GM12878 (cell line): ENCODE measurements at regions of chr14 and their contacts with region 1.

Region 1: DNA sequence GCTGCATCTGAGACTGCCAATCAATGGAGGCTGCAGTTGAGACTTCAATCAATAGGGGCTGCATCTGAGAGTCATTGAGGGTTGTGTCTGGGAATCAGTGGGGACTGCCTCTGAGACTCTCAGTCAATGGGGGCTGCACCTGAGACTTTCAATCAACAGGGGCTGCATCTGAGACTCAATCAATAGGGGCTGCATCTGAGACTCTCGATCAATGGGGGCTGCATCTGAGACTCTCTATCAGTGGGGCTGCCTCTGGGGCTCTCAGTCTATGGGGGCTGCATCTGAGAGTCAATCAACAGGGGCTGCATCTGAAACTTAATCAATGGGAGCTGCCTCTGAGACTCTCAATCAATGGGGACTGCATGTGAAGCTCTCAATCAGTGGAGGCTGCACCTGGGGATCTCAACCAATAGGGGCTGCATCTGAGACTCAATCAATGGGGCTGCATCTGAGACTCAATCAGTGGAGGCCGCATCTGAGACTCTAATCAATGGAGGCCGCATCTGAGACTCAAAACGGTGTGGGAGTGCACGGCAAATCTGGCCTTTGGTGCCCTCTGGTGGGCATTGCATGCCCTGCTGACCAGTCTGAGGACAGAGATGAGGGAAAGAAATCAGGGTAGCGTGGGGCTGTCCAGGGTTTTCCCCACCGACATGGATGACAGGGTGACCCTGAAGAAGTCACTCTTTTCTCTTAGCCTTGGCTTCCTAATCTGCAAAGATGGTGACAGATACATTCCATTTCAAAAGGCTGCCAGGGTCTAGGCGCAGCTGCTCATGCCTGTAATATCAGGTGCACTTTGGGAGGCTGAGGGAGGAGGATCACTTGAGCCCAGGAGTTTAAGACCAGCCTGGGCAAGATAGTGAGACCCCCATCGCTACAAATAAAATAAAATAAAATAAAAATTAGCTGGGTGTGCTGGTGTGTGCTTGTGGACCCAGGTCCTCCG is 41.3 kb upstream of the EIF5 start:
- DNase-seq: peak; percentile 52
- ATAC-seq: peak; percentile 99
- H3K4me3 ChIP-seq: no peak overlapping the region
- H3K27ac ChIP-seq: no peak overlapping the region
- H3K4me1 ChIP-seq: no peaks in the 10 kb centered on the region
- H3K27me3 ChIP-seq: no peaks in the 10 kb centered on the region
- CTCF ChIP-seq: peak; percentile 94 to 98 (median 96)
- EP300 ChIP-seq: no peak
- POLR2A ChIP-seq: no peak
- RAD21 ChIP-seq: peak; percentile 95

Region 2: DNA sequence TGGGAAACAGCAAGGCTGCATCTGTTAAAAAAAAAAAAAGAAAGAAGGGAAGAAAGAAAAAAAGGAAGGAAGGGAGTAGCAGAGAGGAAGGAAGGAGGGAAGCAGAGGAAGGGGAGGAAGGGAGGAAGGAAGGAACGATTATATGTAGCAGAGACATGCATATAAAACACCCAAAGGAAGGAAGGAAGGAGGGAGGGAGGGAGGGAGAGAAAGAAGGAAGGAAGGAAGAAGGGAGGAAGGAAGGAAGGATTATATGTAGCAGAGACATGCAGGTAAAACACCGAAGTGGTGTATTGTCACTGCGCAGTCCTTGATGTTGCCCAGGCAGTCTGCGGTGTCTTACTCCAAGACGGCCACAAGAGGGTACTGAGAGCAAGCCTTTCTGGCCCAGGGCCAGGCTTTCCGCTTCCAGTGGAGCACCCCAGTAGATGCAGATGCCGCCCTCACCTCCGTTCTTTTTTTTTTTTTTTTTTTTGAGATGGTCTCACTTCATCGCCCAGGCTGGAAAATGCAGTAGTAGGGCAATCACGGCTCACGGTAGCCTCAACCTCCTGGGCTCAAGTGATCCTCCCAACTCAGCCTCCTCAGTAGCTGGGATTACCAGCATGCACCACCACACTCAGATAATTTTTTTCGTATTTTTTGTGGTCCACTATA is 214.5 kb before region 1 on chr14:
- CTCF ChIA-PET with region 1: interaction called, 20 read pairs
- POLR2A ChIA-PET with region 1: no interaction called
- RAD21 ChIA-PET with region 1: interaction called, 6 read pairs
- SMC1A ChIA-PET with region 1: interaction called, 7 read pairs
- in situ Hi-C with region 1: loop called (anchors 5 kb)
- intact Hi-C with region 1: loop called (anchors 1 kb)
- DNase-seq: peak; percentile 48
- ATAC-seq: peak; percentile 74
- H3K4me3 ChIP-seq: no peak overlapping the region
- H3K27ac ChIP-seq: no peak overlapping the region
- H3K4me1 ChIP-seq: peaks cover 8% of the 10 kb centered on the region
- H3K27me3 ChIP-seq: no peaks in the 10 kb centered on the region; a peak in 1 of 4 replicates
- CTCF ChIP-seq: peak; percentile 75 to 93 (median 86)
- EP300 ChIP-seq: no peak
- POLR2A ChIP-seq: no peak
- RAD21 ChIP-seq: peak; percentile 83

Region 3: GRCh38 chr14:103158698-103159097 is 134.0 kb before region 1 on chr14:
- CTCF ChIA-PET with region 1: no interaction called
- POLR2A ChIA-PET with region 1: no interaction called
- RAD21 ChIA-PET with region 1: no interaction called
- SMC1A ChIA-PET with region 1: no interaction called
- in situ Hi-C with region 1: no loop called
- intact Hi-C with region 1: no loop called
- DNase-seq: no peak
- ATAC-seq: no peak
- H3K4me3 ChIP-seq: no peak overlapping the region
- H3K27ac ChIP-seq: no peak overlapping the region
- H3K4me1 ChIP-seq: no peaks in the 10 kb centered on the region
- H3K27me3 ChIP-seq: peaks cover 0 to 3% of the 10 kb centered on the region in 2 experiments; a peak in 3 of 4 replicates
- CTCF ChIP-seq: no peak
- EP300 ChIP-seq: no peak
- POLR2A ChIP-seq: no peak
- RAD21 ChIP-seq: no peak

Region 4: GRCh38 chr14:103185051-103185992 is 107.4 kb before region 1 on chr14:
- CTCF ChIA-PET with region 1: interaction called, 21 read pairs
- POLR2A ChIA-PET with region 1: no interaction called
- RAD21 ChIA-PET with region 1: no interaction called
- SMC1A ChIA-PET with region 1: interaction called, 3 read pairs
- in situ Hi-C with region 1: no loop called
- intact Hi-C with region 1: loop called (anchors 2 kb)
- DNase-seq: no peak
- ATAC-seq: peak; percentile 41
- H3K4me3 ChIP-seq: no peak overlapping the region
- H3K27ac ChIP-seq: no peak overlapping the region
- H3K4me1 ChIP-seq: no peaks in the 10 kb centered on the region
- H3K27me3 ChIP-seq: peaks cover 0 to 2% of the 10 kb centered on the region in 2 experiments; a peak in 1 of 4 replicates
- CTCF ChIP-seq: peak; percentile 48 to 67 (median 55); a peak in 5 of 6 replicates
- EP300 ChIP-seq: no peak
- POLR2A ChIP-seq: no peak
- RAD21 ChIP-seq: peak; percentile 62

Region 5: DNA sequence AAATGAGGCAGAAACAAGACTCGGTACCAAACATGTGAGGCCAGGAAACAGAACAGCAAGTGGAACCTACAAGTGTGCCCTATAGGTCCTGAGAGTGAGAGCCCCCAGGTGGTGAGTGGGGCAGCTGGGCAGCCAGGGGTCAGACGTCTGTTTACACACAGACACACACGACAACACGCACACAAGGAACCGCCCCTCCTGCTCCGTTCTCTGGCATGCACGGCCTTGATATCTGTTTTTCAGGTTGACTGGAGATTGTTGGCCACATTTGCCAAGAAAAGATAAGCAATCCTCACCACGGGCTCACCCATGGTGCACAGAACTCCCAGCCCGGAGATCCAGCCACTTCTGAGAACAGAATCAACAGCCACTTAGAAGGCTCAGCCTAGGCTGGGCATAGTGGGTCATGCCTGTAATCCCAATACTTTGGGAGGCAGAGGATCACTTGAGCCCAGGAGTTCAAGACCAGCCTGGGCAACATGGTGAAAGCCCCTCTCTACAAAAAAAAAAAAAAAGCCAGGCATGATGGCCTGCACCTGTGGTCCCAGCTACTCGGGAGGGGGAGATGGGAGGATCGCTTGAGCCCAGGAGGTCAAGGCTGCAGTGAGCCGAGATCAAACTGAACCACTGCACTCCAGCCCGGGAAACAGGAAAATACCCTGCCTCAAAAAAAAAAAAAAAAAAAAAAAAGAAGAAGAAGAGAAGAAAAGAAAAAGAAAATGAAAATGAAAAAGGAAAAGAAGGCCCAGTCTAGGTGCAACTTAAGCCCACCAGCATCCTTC is 22.0 kb after region 1 on chr14:
- CTCF ChIA-PET with region 1: no interaction called
- POLR2A ChIA-PET with region 1: no interaction called
- RAD21 ChIA-PET with region 1: no interaction called
- SMC1A ChIA-PET with region 1: no interaction called
- in situ Hi-C with region 1: no loop called
- intact Hi-C with region 1: no loop called
- DNase-seq: no peak
- ATAC-seq: no peak
- H3K4me3 ChIP-seq: no peak overlapping the region
- H3K27ac ChIP-seq: no peak overlapping the region
- H3K4me1 ChIP-seq: peaks cover 14% of the 10 kb centered on the region
- H3K27me3 ChIP-seq: peaks cover 0 to 1% of the 10 kb centered on the region in 2 experiments; a peak in 2 of 4 replicates
- CTCF ChIP-seq: no peak
- EP300 ChIP-seq: no peak
- POLR2A ChIP-seq: no peak
- RAD21 ChIP-seq: no peak